PC-3 (cell line): ENCODE measurements at regions of chrX and their contacts with region 1.

Region 1: DNA sequence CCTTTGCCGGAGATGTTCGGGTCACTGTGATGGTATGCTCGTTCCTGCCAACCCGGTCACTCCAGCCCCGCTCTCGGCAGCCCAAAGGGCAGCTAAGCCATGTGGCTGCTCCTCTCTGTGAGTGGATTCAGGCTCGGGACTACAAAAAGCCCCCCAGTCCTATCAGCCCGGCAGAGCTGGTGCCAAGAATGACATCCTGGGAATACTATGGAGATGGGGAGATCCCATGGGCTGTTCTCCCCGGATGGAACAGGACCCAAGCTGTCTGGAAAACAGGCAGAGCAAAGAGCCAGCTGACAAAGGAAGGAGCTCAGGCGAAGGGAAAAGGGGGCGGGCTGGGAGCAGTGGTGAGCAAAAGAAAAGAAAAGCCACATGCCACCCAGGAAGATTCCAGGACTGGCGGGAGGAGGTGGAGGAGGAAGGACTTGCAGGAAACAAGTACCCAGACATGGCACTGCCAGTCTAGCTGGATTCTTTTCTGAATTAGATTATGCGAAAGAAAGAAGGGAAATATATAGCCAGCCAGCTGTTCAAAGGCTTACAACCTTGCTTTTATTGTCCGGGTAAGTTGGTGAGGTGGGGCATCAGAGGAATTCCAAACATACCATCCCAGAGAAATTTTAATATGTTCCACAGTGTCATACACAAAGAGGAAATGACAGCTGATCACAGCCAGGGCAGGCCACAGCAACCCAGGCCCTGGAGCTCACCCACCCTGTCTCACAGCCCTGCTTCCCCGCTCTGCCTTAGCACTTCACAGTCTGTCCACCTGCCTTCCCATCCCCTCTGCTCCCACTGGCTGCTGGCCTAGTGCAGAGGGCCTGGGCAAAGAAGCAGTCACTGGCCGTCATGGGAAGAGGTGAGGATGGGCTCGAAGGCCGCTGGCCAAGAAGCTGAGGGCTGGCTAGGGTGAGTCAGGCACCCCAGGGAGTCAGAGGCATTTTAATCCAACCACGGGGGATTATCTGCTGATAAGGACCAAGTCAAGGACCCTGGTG is 3.4 kb downstream of the NDP start:
- DNase-seq: peak; percentile 38
- ATAC-seq: peak; percentile 42
- H3K4me3 ChIP-seq: no peak overlapping the region
- H3K27ac ChIP-seq: peak overlapping the region; percentile 61
- H3K4me1 ChIP-seq: peaks cover 43% of the 10 kb centered on the region
- H3K27me3 ChIP-seq: no peaks in the 10 kb centered on the region
- CTCF ChIP-seq: no peak

Region 2: GRCh38 chrX:43836435-43837184 is 133.2 kb before region 1 on chrX:
- CTCF ChIA-PET with region 1: no interaction called
- POLR2A ChIA-PET with region 1: no interaction called
- intact Hi-C with region 1: no loop called
- DNase-seq: peak; percentile 65
- ATAC-seq: no peak
- H3K4me3 ChIP-seq: no peak overlapping the region
- H3K27ac ChIP-seq: no peak overlapping the region
- H3K4me1 ChIP-seq: peaks cover 13% of the 10 kb centered on the region
- H3K27me3 ChIP-seq: no peaks in the 10 kb centered on the region
- CTCF ChIP-seq: peak; percentile 70

Region 3: DNA sequence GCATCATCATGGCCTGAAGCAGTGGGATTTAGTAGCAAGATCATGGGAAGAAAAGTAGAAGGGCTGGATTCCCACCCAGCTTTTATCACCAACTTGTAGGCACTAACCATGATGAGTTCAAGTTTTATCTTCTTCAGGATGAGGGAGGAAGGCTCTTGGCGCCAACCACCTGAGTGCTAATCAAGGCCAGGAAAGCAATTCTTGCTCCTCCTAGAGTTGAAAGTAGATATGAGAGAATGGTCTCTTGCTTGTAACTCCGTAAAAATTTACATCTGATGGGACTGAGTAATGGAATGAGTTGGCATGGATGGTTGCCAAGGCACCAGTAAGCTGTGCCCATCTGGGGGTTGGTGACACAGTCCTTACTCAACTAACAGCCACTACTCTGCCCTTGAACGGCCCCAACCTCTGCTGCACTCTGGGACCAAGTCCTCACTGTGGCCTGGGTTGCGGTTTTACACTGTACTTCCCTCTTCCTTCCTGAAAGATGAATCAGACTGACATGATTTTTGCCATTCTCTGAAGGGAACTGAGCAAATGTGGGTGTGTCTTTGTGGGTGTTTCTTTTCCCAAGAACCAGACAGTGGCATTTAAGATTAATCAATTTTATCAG is 42.8 kb after region 1 on chrX:
- CTCF ChIA-PET with region 1: interaction called, 3 read pairs
- POLR2A ChIA-PET with region 1: no interaction called
- intact Hi-C with region 1: loop called (anchors 2 kb)
- DNase-seq: peak; percentile 95
- ATAC-seq: peak; percentile 100
- H3K4me3 ChIP-seq: no peak overlapping the region
- H3K27ac ChIP-seq: peak overlapping the region; percentile 71
- H3K4me1 ChIP-seq: peaks cover 37% of the 10 kb centered on the region
- H3K27me3 ChIP-seq: no peaks in the 10 kb centered on the region
- CTCF ChIP-seq: peak; percentile 52

Region 4: GRCh38 chrX:44025555-44025954 is 55.8 kb after region 1 on chrX:
- CTCF ChIA-PET with region 1: interaction called, 8 read pairs
- POLR2A ChIA-PET with region 1: no interaction called
- intact Hi-C with region 1: loop called (anchors 5 kb)
- DNase-seq: peak; percentile 8
- ATAC-seq: no peak; the same call in 1 of the 2 replicates
- H3K4me3 ChIP-seq: no peak overlapping the region
- H3K27ac ChIP-seq: no peak overlapping the region
- H3K4me1 ChIP-seq: no peaks in the 10 kb centered on the region
- H3K27me3 ChIP-seq: no peaks in the 10 kb centered on the region
- CTCF ChIP-seq: no peak

Region 5: DNA sequence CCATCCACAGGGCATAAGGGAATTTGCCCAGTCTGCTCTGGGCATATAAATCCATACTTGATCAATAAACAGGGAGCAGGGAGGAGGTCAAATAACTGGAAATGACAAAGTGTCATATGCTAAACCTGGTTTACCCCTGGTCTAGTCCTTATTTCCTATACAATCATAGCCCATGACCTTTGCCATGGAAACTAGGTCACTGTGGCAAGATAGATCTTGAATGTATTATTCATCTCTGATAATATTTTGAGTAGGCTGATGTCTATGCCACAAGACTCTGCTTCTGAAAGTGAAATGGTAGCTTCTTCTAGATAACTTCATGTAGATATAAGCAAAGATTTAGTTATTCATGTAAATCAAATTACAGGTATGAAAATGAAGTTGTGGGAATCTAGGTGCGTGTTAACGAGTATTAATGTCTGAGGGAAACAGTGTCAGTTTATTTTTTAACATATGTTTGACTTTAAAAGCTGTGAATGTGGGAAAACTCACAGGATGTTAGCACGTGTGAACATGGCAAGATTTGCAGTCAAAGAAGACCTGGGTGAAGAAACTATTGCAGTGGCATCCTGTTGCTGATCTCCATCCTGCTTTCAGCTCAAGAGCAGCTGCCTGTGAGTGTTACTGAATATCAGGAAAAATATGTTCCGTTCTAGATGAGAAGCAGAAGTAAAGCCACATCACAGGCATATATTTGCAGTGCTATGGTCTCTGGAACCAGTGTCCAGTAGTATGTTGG is 85.2 kb after region 1 on chrX:
- CTCF ChIA-PET with region 1: no interaction called
- POLR2A ChIA-PET with region 1: no interaction called
- intact Hi-C with region 1: no loop called
- DNase-seq: no peak
- ATAC-seq: no peak
- H3K4me3 ChIP-seq: no peak overlapping the region
- H3K27ac ChIP-seq: no peak overlapping the region
- H3K4me1 ChIP-seq: no peaks in the 10 kb centered on the region
- H3K27me3 ChIP-seq: no peaks in the 10 kb centered on the region
- CTCF ChIP-seq: no peak